BJ (cell line): ENCODE measurements at regions of chr15 and their contacts with region 1.

Region 1: DNA sequence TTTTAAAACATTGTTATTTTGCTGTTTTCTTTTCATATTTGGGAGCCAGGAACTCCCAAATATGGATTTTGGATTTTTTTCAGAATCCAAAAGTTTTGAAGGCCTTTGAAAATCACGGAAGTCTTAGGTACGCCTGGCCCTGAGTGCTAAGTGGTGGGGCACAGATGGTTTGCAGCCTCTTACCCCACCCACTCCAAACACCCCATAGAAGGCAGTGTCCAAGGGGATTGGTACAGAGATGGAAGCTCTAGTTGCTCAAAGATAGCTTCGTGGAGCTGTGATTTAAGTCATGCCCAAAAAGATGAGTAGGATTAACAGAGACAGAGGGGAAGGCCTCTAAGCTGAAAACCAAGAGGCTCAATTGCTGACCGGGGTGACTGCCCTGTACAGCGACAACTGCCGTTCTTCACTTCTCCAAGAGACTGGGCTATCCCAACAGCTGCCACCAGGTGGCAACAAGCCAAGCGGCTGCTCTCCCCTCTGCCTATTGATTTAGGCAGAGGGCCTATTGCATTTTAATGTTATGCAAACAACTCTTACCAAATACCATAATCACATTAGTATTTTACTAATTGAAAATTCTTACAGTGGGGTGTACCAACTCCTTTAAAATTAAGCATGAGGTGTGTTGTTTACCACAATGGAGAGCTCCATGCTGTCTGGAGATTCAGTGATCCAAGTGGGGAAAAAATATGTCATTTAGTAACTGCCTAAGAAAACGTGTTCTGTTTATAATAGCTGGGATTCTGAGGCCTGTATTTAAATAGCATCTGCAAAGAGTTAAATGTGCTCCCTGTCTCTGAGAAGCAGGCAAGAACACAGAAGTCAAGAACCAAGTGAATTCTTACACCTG is 64.0 kb upstream of the C15orf61 start:
- DNase-seq: no peak
- H3K4me3 ChIP-seq: no peak overlapping the region
- H3K27me3 ChIP-seq: no peaks in the 10 kb centered on the region
- CTCF ChIP-seq: peak; percentile 92

Region 2: GRCh38 chr15:67472957-67473356 is 16.1 kb after region 1 on chr15:
- CTCF ChIA-PET with region 1: interaction called, 26 read pairs
- POLR2A ChIA-PET with region 1: no interaction called
- DNase-seq: no peak
- H3K4me3 ChIP-seq: no peak overlapping the region
- H3K27me3 ChIP-seq: no peaks in the 10 kb centered on the region
- CTCF ChIP-seq: no peak

Region 3: GRCh38 chr15:67771189-67771800 is 314.4 kb after region 1 on chr15:
- CTCF ChIA-PET with region 1: no interaction called
- POLR2A ChIA-PET with region 1: no interaction called
- DNase-seq: no peak
- H3K4me3 ChIP-seq: no peak overlapping the region
- H3K27me3 ChIP-seq: no peaks in the 10 kb centered on the region
- CTCF ChIP-seq: no peak

Region 4: DNA sequence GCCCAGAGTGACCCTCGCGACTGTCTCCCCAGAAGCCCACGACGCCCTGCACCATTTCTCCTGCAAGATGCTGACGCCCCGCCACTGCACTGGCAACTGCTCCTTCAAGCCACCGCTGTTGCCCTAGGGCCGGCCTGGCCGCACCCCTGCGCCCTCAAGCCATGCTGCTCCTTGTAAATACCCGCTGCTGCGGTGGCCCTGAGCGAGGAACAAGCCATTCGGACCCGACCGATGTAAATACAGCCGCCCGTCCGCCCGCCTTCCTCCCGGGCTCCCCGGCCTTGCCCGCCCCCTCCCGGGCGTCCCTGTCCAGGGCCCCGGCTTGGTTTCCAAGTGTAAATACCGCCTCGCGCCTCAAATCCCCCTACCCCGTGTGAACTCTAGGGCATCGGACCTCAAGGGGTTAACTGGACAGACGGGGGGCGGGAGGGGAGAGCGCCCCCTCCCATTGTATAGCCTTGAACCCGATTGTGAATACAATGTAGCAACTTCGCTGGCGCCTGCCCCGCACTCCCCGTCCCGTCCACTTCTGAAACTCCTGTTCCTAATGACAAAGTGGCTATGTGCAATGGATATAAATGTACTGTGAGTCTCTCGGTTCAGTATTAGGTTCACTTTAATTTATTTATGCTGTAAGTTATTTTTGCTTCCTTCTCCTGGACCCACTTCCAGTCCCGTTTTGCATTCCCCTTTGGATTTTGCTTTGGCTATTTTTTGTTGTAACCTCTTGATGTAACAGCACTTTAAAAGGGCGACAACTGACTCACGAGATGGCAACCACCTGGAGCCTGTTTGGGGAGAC is 377.0 kb after region 1 on chr15:
- CTCF ChIA-PET with region 1: interaction called, 54 read pairs
- POLR2A ChIA-PET with region 1: no interaction called
- DNase-seq: no peak
- H3K4me3 ChIP-seq: no peak overlapping the region
- H3K27me3 ChIP-seq: peaks cover 64% of the 10 kb centered on the region
- CTCF ChIP-seq: peak; percentile 67

Region 5: GRCh38 chr15:67839929-67840748 is 383.2 kb after region 1 on chr15 and contains the start of gene RNU6-1:
- CTCF ChIA-PET with region 1: interaction called, 54 read pairs
- POLR2A ChIA-PET with region 1: interaction called, 10 read pairs
- DNase-seq: peak; percentile 72
- H3K4me3 ChIP-seq: peak within 1 kb of the TSS; percentile 67
- H3K27me3 ChIP-seq: peaks cover 17% of the 10 kb centered on the region
- CTCF ChIP-seq: no peak
- polyA plus RNA-seq, gene RNU6-1: not detected in 2 replicates